ENCODE measurements at regions of chr7 and their contacts with region 1.

Region 1: DNA sequence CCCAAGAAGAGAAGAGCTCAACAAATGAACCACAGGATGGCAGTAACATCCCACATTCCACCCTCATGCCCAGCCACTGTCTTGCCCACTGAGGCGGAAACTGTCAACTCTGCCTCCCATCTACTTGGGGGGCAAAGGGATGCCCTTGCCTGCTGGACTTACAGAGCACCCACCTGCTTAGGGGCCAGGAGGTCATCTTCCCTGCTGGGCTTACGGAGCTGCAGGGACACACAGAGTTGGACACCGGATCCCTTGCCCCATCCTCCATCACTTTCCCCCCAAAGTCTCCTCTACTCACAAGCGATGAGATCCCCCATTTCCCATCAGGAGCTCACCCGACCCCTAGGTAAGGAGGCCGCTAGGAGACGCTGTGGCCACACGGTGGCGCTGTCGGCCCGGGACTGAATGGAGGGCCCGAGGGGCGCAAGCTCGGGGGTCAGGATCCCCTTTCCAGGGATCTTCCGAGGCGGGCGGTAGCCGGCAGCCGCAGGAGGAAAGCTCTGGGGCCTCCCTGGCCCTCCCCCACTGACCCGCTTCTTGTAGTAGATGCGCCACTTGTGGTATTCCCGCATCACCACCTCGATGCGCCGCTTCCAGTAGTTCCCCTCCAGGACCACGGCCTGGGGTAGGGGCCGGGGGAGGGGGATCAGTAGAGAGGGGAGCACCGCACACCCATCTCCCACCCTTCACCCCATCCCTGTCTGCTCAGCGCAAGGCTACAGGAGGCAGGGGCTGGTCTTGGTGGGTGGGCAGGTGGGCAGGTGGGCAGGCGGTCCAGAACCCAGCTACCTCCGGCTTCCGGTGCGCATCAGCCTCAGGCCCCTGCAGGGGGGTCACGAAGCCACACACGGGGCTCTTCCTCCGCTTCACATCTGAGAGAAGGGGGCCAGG is 17.3 kb downstream of the MLXIPL start:
- DNase-seq: peak; percentile 67 to 91
- ATAC-seq: peak; percentile 84
- H3K4me3 ChIP-seq: no peak overlapping the region
- H3K27ac ChIP-seq: no peak overlapping the region
- H3K4me1 ChIP-seq: no peaks in the 10 kb centered on the region
- H3K27me3 ChIP-seq: no peaks in the 10 kb centered on the region

Region 2: GRCh38 chr7:73547841-73548240 is 59.2 kb before region 1 on chr7:
- intact Hi-C with region 1: no loop called
- DNase-seq: no peak
- ATAC-seq: no peak
- H3K4me3 ChIP-seq: no peak overlapping the region
- H3K27ac ChIP-seq: no peak overlapping the region
- H3K4me1 ChIP-seq: no peaks in the 10 kb centered on the region
- H3K27me3 ChIP-seq: no peaks in the 10 kb centered on the region

Region 3: DNA sequence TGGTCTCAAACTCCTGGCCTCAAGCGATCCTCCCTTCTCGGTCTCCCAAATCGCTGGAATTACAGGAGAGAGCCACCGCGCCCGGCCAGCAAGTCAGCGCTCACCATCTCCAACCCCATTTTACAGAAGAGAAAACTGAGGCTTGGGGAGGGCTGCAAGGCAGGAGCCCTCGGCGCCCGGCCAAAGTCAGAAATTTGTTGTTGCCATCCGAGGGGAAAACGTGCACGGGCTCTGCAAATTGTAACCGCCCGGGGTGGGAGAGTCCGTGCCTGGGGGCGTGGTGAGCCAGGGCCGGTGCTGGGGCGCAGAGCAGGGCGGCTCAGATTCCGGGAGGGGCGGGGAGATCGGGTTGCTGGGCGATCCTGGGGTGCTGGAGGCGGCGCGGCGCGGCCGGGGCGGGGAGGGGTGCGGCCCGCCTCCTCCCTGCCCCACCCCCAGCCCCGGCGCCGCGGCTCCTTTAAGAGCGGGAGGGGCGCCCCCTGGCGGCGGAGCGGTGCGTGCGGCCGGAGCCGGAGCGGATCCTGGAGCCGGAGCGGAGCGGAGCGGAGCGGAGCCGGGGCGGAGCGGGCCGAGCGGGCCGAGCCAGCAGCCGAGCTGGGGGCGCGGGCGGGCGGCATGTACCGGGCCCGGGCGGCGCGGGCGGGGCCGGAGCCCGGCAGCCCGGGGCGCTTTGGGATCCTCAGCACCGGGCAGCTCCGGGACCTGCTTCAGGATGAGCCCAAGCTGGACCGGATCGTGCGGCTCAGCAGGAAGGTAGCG is 60.5 kb after region 1 on chr7 and contains the start of gene VPS37D:
- intact Hi-C with region 1: loop called (anchors 5 kb)
- DNase-seq: peak; percentile 91 to 97
- ATAC-seq: peak; percentile 96
- H3K4me3 ChIP-seq: peak within 1 kb of the TSS; percentile 53 to 73
- H3K27ac ChIP-seq: no peak within 1 kb of the TSS
- H3K4me1 ChIP-seq: no peaks in the 10 kb centered on the region
- H3K27me3 ChIP-seq: no peaks in the 10 kb centered on the region
- total RNA-seq, gene VPS37D: 1.5 to 1.8 TPM

Region 4: DNA sequence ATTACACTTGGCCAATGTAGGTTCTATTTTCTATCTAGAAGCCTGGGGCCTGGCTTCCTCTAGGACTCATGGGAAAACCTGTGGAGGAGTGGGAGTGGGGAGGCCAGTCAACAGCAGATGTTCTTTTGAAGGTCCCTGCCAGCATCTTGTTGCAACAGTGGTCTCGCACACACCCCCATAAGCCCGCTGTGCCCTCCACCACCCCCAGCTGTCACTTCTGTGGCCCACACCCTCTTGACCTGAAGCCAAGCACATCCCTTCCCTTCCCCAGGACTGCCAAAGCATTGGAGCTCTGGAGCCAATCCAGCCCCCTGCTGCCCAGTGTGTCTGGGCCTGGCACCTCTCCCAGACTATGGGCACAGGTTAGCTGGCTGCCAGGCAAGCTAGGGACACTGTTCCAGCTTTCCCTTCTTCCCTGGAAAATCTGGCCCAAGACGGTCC is 114.4 kb after region 1 on chr7:
- intact Hi-C with region 1: loop called (anchors 1 to 2 kb)
- DNase-seq: peak; percentile 79 to 85
- ATAC-seq: peak; percentile 48
- H3K4me3 ChIP-seq: no peak overlapping the region
- H3K27ac ChIP-seq: no peak overlapping the region
- H3K4me1 ChIP-seq: no peaks in the 10 kb centered on the region
- H3K27me3 ChIP-seq: no peaks in the 10 kb centered on the region

Measured in aorta (tissue), 5 donors.